ENCODE measurements at regions of chr16 and their contacts with region 1.

Region 1: GRCh38 chr16:30472328-30472942 is at the start of gene ITGAL:
- DNase-seq: peak; percentile 90
- H3K4me3 ChIP-seq: peak within 1 kb of the TSS; percentile 77
- H3K27ac ChIP-seq: peak within 1 kb of the TSS; percentile 95
- H3K4me1 ChIP-seq: peaks cover 61% of the 10 kb centered on the region
- CTCF ChIP-seq: no peak
- total RNA-seq, gene ITGAL: 30.7 and 40.2 TPM in 2 replicates

Region 2: GRCh38 chr16:30445408-30446202 is 26.8 kb before region 1 on chr16 and contains the start of gene SEPHS2:
- CTCF ChIA-PET with region 1: interaction called, 3 read pairs
- POLR2A ChIA-PET with region 1: interaction called, 6 read pairs
- intact Hi-C with region 1: loop called (anchors 1 kb)
- DNase-seq: peak; percentile 99
- H3K4me3 ChIP-seq: peak within 1 kb of the TSS; percentile 86
- H3K27ac ChIP-seq: peak within 1 kb of the TSS; percentile 84
- H3K4me1 ChIP-seq: peaks cover 37% of the 10 kb centered on the region
- CTCF ChIP-seq: peak; percentile 70
- total RNA-seq, gene SEPHS2: 14.4 and 15.3 TPM in 2 replicates

Region 3: GRCh38 chr16:30458561-30459394 is 13.7 kb before region 1 on chr16:
- CTCF ChIA-PET with region 1: interaction called, 3 read pairs
- POLR2A ChIA-PET with region 1: interaction called, 69 read pairs
- intact Hi-C with region 1: loop called (anchors 2 kb)
- DNase-seq: peak; percentile 84
- H3K4me3 ChIP-seq: peak overlapping the region; percentile 28
- H3K27ac ChIP-seq: peak overlapping the region; percentile 74
- H3K4me1 ChIP-seq: peaks cover 79% of the 10 kb centered on the region
- CTCF ChIP-seq: 0 out of 2 replicates have a peak, but pooled peaks have one; percentile 27

Region 4: DNA sequence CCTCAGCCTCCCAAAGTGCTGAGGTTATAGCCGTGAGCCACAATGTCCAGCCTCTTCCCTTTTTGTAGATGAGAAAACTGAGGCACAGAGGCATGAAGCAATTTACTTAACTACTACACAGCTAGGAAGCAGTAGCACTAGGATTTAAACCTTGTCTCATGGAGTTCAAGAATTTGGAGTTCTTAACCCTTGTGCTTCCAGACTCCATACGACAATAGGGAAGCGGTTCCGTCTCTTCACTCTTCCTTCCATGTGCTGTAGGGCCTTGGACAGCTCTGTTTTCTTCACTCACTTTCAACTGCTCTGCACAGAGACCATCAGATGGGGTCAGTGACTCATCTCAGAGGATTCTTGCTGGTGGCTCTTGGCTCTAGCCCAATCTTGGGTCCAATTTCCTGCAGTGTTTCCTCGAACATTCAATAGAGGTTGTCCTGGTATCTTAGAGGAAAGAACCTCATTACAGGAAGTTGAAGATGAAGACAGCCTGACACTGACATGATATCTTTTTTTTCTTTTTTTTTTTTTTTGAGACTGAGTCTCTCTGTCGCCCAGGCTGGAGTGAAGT is 19.4 kb after region 1 on chr16:
- CTCF ChIA-PET with region 1: no interaction called
- POLR2A ChIA-PET with region 1: no interaction called
- intact Hi-C with region 1: no loop called
- DNase-seq: no peak
- H3K4me3 ChIP-seq: no peak overlapping the region
- H3K27ac ChIP-seq: no peak overlapping the region
- H3K4me1 ChIP-seq: no peaks in the 10 kb centered on the region
- CTCF ChIP-seq: no peak

Region 5: GRCh38 chr16:30526823-30527635 is 54.6 kb after region 1 on chr16:
- CTCF ChIA-PET with region 1: no interaction called
- POLR2A ChIA-PET with region 1: no interaction called
- intact Hi-C with region 1: loop called (anchors 1 kb)
- DNase-seq: peak; percentile 98
- H3K4me3 ChIP-seq: peak overlapping the region; percentile 84
- H3K27ac ChIP-seq: peak overlapping the region; percentile 86
- H3K4me1 ChIP-seq: peaks cover 27% of the 10 kb centered on the region
- CTCF ChIP-seq: peak; percentile 48

Region 6: GRCh38 chr16:30534368-30535105 is 62.1 kb after region 1 on chr16 and contains the start of gene ZNF747:
- CTCF ChIA-PET with region 1: no interaction called
- POLR2A ChIA-PET with region 1: interaction called, 3 read pairs
- intact Hi-C with region 1: loop called (anchors 2 kb)
- DNase-seq: peak; percentile 94
- H3K4me3 ChIP-seq: peak within 1 kb of the TSS; percentile 75
- H3K27ac ChIP-seq: peak within 1 kb of the TSS; percentile 82
- H3K4me1 ChIP-seq: peaks cover 34% of the 10 kb centered on the region
- CTCF ChIP-seq: no peak
- total RNA-seq, gene ZNF747: 15.7 and 22.2 TPM in 2 replicates

Region 7: GRCh38 chr16:30650369-30651123 is 178.1 kb after region 1 on chr16 and contains the start of gene PRR14:
- CTCF ChIA-PET with region 1: no interaction called
- POLR2A ChIA-PET with region 1: interaction called, 3 read pairs
- intact Hi-C with region 1: loop called (anchors 2 kb)
- DNase-seq: peak; percentile 99
- H3K4me3 ChIP-seq: peak within 1 kb of the TSS; percentile 86
- H3K27ac ChIP-seq: peak within 1 kb of the TSS; percentile 75
- H3K4me1 ChIP-seq: peaks cover 17% of the 10 kb centered on the region
- CTCF ChIP-seq: no peak
- total RNA-seq, gene PRR14: 33.2 and 35.2 TPM in 2 replicates